B cell (primary cell): ENCODE measurements at regions of chr7 and their contacts with region 1.

Region 1: GRCh38 chr7:1028031-1028770 is 16.1 kb upstream of the GPR146 start:
- DNase-seq: peak; percentile 89
- ATAC-seq: peak; percentile 53
- H3K4me3 ChIP-seq: peak overlapping the region in 4 of 5 experiments; percentile 50 to 65 (median 58)
- H3K4me3 Mint-ChIP-seq: peak overlapping the region; percentile 89
- H3K27ac ChIP-seq: peak overlapping the region; percentile 47 to 56
- H3K27ac Mint-ChIP-seq: peak overlapping the region; percentile 82
- H3K4me1 ChIP-seq: peaks cover 59 to 72% of the 10 kb centered on the region in 2 donors
- H3K4me1 Mint-ChIP-seq: peaks cover 64% of the 10 kb centered on the region
- H3K27me3 ChIP-seq: peaks cover 0 to 4% (median 1%) of the 10 kb centered on the region in 4 experiments
- H3K27me3 Mint-ChIP-seq: peaks cover 3% of the 10 kb centered on the region
- CTCF ChIP-seq: no peak

Region 2: GRCh38 chr7:923108-924041 is 104.8 kb before region 1 on chr7:
- CTCF ChIA-PET with region 1: no interaction called
- POLR2A ChIA-PET with region 1: no interaction called
- intact Hi-C with region 1: loop called (anchors 5 kb)
- DNase-seq: peak; percentile 88
- ATAC-seq: peak; percentile 87
- H3K4me3 ChIP-seq: peak overlapping the region; percentile 21 to 67 (median 55)
- H3K4me3 Mint-ChIP-seq: peak overlapping the region; percentile 88
- H3K27ac ChIP-seq: peak overlapping the region; percentile 84 to 85
- H3K27ac Mint-ChIP-seq: peak overlapping the region; percentile 93
- H3K4me1 ChIP-seq: peaks cover 31 to 55% of the 10 kb centered on the region in 2 donors
- H3K4me1 Mint-ChIP-seq: peaks cover 37% of the 10 kb centered on the region
- H3K27me3 ChIP-seq: no peaks in the 10 kb centered on the region
- H3K27me3 Mint-ChIP-seq: no peaks in the 10 kb centered on the region
- CTCF ChIP-seq: no peak

Region 3: DNA sequence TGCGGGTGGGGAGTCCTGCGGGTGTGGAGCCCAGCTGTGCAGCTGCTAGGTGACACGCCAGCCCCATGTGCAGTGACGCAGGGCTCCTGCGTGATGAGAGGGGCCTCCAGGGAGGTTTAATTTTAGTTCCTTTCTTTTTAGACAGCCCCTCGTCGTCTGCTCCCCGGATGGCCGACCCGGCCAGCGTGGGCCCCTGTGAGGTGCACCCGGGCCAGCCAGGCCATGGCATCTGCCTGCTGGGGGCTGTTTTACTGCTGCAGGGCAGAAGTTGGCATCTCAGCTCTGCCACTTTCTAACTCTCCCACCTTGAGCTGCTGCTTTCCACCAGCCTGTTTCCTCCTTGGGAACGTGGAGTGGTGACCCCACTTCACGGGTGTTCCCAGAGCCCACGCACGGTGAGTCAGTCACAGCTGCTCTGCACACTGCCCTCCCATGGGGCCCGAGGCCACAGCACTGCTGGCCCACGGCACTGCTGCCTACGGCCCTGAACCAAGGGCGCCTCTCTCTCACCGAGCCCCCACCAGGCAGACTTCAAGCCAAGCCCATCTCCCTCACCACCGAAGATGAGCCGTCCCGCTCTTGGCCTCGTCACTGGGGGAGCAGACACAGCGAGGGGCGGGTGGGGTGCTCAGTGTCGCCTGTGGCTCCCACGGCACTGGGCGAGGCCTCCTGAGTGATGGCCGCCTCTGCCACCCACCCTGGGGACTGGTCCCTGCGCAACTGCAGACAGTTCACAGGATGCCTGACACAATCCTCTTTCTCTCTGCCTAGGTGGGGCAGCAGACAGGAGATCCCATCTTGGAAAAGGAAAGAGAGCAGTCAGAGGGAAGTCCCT is 24.0 kb before region 1 on chr7:
- CTCF ChIA-PET with region 1: interaction called, 14 read pairs
- POLR2A ChIA-PET with region 1: interaction called, 15 read pairs
- intact Hi-C with region 1: loop called (anchors 1 kb)
- DNase-seq: peak; percentile 87
- ATAC-seq: peak; percentile 82
- H3K4me3 ChIP-seq: no peak overlapping the region
- H3K4me3 Mint-ChIP-seq: peak overlapping the region; percentile 76
- H3K27ac ChIP-seq: peak overlapping the region in 1 of 2 donors; percentile 34
- H3K27ac Mint-ChIP-seq: peak overlapping the region; percentile 91
- H3K4me1 ChIP-seq: peaks cover 10 to 26% of the 10 kb centered on the region in 2 donors
- H3K4me1 Mint-ChIP-seq: peaks cover 40% of the 10 kb centered on the region
- H3K27me3 ChIP-seq: no peaks in the 10 kb centered on the region
- H3K27me3 Mint-ChIP-seq: no peaks in the 10 kb centered on the region
- CTCF ChIP-seq: no peak

Region 4: DNA sequence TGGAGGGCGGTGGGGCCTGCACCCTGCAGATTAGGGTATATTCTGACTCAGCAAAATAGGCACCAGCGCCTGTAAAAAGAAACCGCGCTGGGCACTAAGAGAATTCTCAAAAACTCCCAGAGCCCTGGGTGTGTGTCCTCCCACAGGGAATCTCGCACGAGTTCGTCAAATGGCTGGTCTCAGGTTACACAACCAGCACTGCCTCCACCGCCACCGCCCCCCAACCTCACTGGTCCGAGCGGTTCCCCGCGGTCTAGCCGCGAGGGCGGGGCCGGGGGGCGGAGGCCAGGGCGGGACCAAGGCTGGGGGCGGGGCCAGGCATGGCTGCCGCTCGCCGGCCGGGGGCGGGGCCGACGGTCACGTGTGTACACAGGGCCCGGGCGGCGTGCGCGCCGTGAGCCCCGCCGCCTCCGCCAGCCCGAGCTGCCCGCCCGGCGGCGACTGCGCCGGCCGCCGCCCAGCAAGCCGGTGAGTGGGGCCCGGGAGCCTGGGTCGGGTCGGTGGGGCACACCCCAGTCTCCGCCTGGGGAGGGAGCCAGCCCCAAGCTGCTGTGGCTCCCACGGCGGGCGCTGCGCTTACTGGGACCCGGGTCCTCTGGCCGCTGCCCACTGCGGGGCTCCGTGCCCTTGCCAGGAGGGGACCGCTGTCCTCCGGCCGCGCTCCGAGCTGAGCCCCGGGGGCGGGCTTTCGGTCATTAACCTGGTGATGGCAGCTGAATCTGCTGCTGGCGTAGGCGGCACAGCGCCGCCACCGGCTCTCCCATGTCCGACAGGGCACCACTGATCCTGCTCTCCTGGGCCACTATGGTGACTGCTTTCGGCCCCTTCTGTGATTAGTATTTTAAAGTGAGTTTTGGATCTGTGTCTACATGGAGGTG is 16.2 kb after region 1 on chr7 and contains the start of gene GPR146:
- CTCF ChIA-PET with region 1: interaction called, 18 read pairs
- POLR2A ChIA-PET with region 1: interaction called, 15 read pairs
- intact Hi-C with region 1: loop called (anchors 1 kb)
- DNase-seq: peak; percentile 91
- ATAC-seq: peak; percentile 95
- H3K4me3 ChIP-seq: peak within 1 kb of the TSS; percentile 11 to 75 (median 63)
- H3K4me3 Mint-ChIP-seq: peak within 1 kb of the TSS; percentile 96
- H3K27ac ChIP-seq: peak within 1 kb of the TSS in 1 of 2 donors; percentile 69
- H3K27ac Mint-ChIP-seq: peak within 1 kb of the TSS; percentile 75
- H3K4me1 ChIP-seq: peaks cover 17 to 20% of the 10 kb centered on the region in 2 donors
- H3K4me1 Mint-ChIP-seq: peaks cover 28% of the 10 kb centered on the region
- H3K27me3 ChIP-seq: peaks cover 0 to 5% (median 1%) of the 10 kb centered on the region in 4 experiments
- H3K27me3 Mint-ChIP-seq: peaks cover 3% of the 10 kb centered on the region
- CTCF ChIP-seq: peak; percentile 80
- total RNA-seq, gene GPR146: 44.6 and 45.4 TPM in 2 replicates

Region 5: GRCh38 chr7:1137510-1138167 is 109.4 kb after region 1 on chr7:
- CTCF ChIA-PET with region 1: no interaction called
- POLR2A ChIA-PET with region 1: interaction called, 14 read pairs
- intact Hi-C with region 1: loop called (anchors 1 kb)
- DNase-seq: no peak
- ATAC-seq: peak; percentile 64
- H3K4me3 ChIP-seq: peak overlapping the region; percentile 21 to 96 (median 75)
- H3K4me3 Mint-ChIP-seq: peak overlapping the region; percentile 89
- H3K27ac ChIP-seq: peak overlapping the region; percentile 73 to 91
- H3K27ac Mint-ChIP-seq: peak overlapping the region; percentile 92
- H3K4me1 ChIP-seq: peaks cover 28 to 37% of the 10 kb centered on the region in 2 donors
- H3K4me1 Mint-ChIP-seq: peaks cover 43% of the 10 kb centered on the region
- H3K27me3 ChIP-seq: no peaks in the 10 kb centered on the region
- H3K27me3 Mint-ChIP-seq: no peaks in the 10 kb centered on the region
- CTCF ChIP-seq: no peak

Region 6: DNA sequence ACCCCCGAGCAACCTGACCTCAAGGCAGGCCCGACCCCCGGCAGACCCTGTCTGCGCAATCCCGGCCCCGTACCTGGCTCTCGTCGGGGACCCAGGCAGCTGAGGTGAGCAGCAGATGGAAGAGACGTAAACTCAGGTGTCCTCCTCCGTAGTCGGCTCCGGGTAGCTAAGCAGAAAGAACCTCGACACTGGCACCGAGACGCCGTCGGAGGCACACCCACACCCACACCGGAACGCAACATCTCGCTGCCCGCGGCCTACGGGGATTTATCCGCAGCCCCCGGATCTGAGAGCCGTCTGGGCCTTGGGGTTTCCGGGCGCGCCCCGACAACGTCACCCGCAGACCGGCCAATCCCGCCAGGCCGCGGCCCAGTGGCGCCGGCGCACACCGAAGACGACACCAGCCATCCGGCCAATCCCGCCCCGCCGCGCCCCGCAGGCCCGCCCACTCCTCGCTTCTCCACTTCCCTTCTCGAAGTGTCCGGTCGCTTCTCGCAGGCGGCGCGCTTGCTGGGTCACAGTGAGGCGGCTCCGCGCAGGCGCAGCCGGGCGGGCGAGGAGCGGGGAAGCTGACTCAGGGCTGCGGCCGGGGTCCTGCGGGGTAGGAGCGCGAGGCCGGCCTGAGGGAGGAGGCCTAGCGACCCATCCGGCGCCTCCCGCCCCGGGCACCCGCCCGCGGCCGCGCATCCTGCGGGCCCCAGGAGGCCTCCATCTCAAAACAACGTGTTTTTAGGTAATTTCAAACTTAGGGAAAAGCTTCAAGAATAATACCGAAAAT is 131.9 kb after region 1 on chr7 and contains the start of gene ZFAND2A:
- CTCF ChIA-PET with region 1: no interaction called
- POLR2A ChIA-PET with region 1: no interaction called
- intact Hi-C with region 1: loop called (anchors 1 kb)
- DNase-seq: peak; percentile 98
- ATAC-seq: peak; percentile 97
- H3K4me3 ChIP-seq: peak within 1 kb of the TSS; percentile 79 to 99 (median 94)
- H3K4me3 Mint-ChIP-seq: peak within 1 kb of the TSS; percentile 87
- H3K27ac ChIP-seq: peak within 1 kb of the TSS; percentile 89 to 90
- H3K27ac Mint-ChIP-seq: peak within 1 kb of the TSS; percentile 90
- H3K4me1 ChIP-seq: peaks cover 16 to 22% of the 10 kb centered on the region in 2 donors
- H3K4me1 Mint-ChIP-seq: peaks cover 24% of the 10 kb centered on the region
- H3K27me3 ChIP-seq: no peaks in the 10 kb centered on the region
- H3K27me3 Mint-ChIP-seq: no peaks in the 10 kb centered on the region
- CTCF ChIP-seq: no peak
- total RNA-seq, gene ZFAND2A: 26.7 and 27.3 TPM in 2 replicates

Region 7: DNA sequence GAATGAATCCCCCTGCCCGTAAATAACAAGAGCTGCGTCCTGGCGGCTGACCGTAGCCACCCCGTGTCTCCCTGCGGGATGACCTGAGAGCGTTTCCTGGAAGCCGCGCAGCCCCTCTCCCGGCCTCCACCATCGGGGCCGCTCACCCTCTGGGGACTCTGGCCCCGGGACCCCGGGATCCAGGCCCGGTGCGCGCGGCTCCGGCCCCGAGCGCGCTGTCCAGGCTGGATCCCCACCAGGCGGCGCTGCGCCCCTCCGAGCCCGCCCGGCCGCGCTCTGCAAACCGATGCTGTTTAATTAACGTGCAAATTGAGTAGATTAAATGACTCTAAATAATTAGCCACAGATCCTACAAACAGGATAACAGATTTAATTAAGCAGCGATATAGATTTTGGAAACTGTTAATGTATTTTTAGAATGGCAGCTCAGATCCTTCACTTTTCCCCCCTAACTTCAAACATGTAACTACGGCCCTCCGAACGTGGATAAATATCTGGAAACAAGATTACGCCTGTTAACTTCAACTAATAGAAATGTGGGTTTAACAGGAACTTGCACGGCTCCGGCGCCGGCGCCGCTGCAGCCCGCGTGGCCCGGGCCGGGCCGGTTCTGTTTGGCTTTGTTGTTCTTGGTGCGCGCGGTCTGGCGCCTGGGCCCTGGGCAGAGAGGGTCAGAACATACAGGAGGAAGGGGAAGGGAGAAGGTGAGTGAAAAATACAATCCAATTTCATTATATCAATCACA is 197.4 kb after region 1 on chr7:
- CTCF ChIA-PET with region 1: no interaction called
- POLR2A ChIA-PET with region 1: no interaction called
- intact Hi-C with region 1: no loop called
- DNase-seq: peak; percentile 51
- ATAC-seq: no peak
- H3K4me3 ChIP-seq: no peak overlapping the region
- H3K4me3 Mint-ChIP-seq: no peak overlapping the region
- H3K27ac ChIP-seq: no peak overlapping the region
- H3K27ac Mint-ChIP-seq: peak overlapping the region; percentile 56
- H3K4me1 ChIP-seq: peaks cover 0 to 11% of the 10 kb centered on the region in 2 donors
- H3K4me1 Mint-ChIP-seq: no peaks in the 10 kb centered on the region
- H3K27me3 ChIP-seq: peaks cover 0 to 76% (median 58%) of the 10 kb centered on the region in 4 experiments
- H3K27me3 Mint-ChIP-seq: peaks cover 53% of the 10 kb centered on the region
- CTCF ChIP-seq: peak; percentile 61

Region 8: DNA sequence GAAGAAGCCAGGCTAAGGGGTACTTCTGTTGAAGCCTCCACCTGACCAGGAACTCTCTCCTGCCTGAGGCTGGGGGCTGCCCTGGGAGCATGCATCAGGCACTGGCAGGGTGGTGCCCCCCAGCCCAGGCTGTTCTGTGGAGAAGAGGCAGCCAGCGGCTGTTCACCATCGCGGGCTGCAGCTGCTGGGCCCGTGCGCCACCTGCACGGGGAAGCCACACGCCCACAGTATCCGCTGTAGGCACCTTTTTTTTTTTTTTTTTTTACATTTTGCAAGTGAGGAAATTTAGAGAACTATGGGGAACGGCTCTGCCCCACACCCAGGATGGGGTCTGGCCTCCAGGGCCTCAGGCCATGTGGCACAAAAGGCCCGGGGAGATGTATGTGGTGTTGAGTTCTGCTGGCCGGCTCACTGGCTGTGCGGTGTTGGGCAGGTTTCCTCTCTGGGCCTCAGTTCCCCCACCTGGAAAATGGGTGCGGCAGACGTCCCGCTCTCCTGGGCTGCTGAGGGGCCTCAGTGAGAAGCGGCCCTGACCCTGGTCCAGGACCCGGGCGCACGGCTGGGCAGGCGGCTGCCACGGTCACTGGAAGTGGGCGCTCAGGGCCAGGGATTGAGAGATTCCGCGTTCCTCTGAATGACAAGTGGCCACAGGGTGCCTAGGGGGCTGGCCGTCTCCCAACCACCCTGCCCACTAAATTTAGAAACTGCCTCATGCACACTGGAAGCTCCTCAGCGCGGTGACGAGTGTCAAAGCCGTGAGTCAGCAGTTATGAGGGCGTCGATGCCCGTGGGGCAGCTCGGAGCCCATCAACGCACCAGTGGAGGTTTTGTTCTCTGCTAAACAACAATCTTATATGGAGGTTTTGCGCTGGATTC is 484.8 kb after region 1 on chr7:
- CTCF ChIA-PET with region 1: no interaction called
- POLR2A ChIA-PET with region 1: no interaction called
- intact Hi-C with region 1: no loop called
- DNase-seq: peak; percentile 82
- ATAC-seq: peak; percentile 87
- H3K4me3 ChIP-seq: peak overlapping the region in 4 of 5 experiments; percentile 18 to 50 (median 29)
- H3K4me3 Mint-ChIP-seq: peak overlapping the region; percentile 78
- H3K27ac ChIP-seq: peak overlapping the region; percentile 63 to 64
- H3K27ac Mint-ChIP-seq: peak overlapping the region; percentile 86
- H3K4me1 ChIP-seq: peaks cover 36 to 45% of the 10 kb centered on the region in 2 donors
- H3K4me1 Mint-ChIP-seq: peaks cover 36% of the 10 kb centered on the region
- H3K27me3 ChIP-seq: peaks cover 0 to 2% (median 0%) of the 10 kb centered on the region in 4 experiments
- H3K27me3 Mint-ChIP-seq: no peaks in the 10 kb centered on the region
- CTCF ChIP-seq: no peak